T-cell (primary cell): ENCODE measurements at regions of chr9 and their contacts with region 1.

Region 1: DNA sequence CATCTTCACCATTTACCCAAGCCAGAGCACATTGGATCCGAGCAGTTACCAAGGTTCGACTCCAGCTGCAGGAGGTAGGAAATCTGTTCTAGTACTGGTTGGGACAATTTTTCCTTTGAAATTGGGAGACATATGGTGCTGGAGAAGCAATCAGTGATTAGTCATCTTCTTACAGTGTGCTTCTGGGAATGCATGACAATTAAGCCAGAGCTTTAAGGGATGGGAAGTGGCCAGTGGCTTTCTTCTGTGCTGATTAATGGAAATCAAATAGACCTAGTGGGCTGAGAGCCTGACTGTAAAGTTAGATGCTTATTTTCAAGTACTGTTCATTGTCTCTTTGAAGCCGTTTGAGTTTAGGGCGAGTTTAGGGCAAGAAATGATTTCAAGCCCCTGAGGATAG is 152.1 kb downstream of the UNC13B start:
- DNase-seq: no peak
- ATAC-seq: no peak
- H3K4me3 ChIP-seq: no peak overlapping the region
- H3K4me3 Mint-ChIP-seq: no peak overlapping the region
- H3K27ac ChIP-seq: no peak overlapping the region
- H3K27ac Mint-ChIP-seq: no peak overlapping the region
- H3K4me1 ChIP-seq: no peaks in the 10 kb centered on the region
- H3K4me1 Mint-ChIP-seq: no peaks in the 10 kb centered on the region
- H3K27me3 ChIP-seq: no peaks in the 10 kb centered on the region
- H3K27me3 Mint-ChIP-seq: peaks cover 0 to 4% of the 10 kb centered on the region in 2 donors

Region 2: GRCh38 chr9:35286381-35286780 is 27.5 kb before region 1 on chr9:
- CTCF ChIA-PET with region 1: no interaction called
- POLR2A ChIA-PET with region 1: interaction called in 1 of 2 experiments, 10 read pairs
- DNase-seq: no peak
- ATAC-seq: no peak
- H3K4me3 ChIP-seq: no peak overlapping the region
- H3K4me3 Mint-ChIP-seq: no peak overlapping the region
- H3K27ac ChIP-seq: no peak overlapping the region
- H3K27ac Mint-ChIP-seq: no peak overlapping the region
- H3K4me1 ChIP-seq: no peaks in the 10 kb centered on the region
- H3K4me1 Mint-ChIP-seq: no peaks in the 10 kb centered on the region
- H3K27me3 ChIP-seq: peaks cover 0 to 7% of the 10 kb centered on the region in 2 experiments
- H3K27me3 Mint-ChIP-seq: peaks cover 8 to 31% of the 10 kb centered on the region in 2 donors

Region 3: GRCh38 chr9:35341585-35341984 is 27.7 kb after region 1 on chr9:
- CTCF ChIA-PET with region 1: no interaction called
- POLR2A ChIA-PET with region 1: no interaction called
- DNase-seq: no peak
- ATAC-seq: no peak
- H3K4me3 ChIP-seq: no peak overlapping the region
- H3K4me3 Mint-ChIP-seq: no peak overlapping the region
- H3K27ac ChIP-seq: no peak overlapping the region
- H3K27ac Mint-ChIP-seq: no peak overlapping the region
- H3K4me1 ChIP-seq: no peaks in the 10 kb centered on the region
- H3K4me1 Mint-ChIP-seq: no peaks in the 10 kb centered on the region
- H3K27me3 ChIP-seq: peaks cover 0 to 13% of the 10 kb centered on the region in 2 experiments
- H3K27me3 Mint-ChIP-seq: peaks cover 13 to 16% of the 10 kb centered on the region in 2 donors

Region 4: DNA sequence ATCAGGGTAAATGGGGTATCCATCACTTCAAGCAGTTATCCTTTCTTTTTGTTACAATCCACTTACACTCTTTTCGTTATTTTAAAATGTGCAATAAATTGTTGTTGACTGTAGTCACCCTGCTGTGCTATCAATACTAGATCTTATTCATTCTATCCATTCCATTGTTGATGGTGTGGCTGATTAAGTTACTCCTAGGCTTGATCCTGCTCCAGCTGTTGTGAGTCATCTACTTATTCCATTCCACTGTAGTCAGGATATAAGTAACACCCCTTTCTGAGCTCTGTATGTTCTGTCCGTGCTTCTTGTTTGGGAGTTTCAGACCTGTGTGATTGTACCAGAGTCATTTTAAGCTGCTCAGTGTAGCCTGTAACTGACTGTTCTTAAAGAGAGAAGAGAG is 53.5 kb after region 1 on chr9:
- CTCF ChIA-PET with region 1: no interaction called
- POLR2A ChIA-PET with region 1: no interaction called
- DNase-seq: no peak
- ATAC-seq: no peak
- H3K4me3 ChIP-seq: no peak overlapping the region
- H3K4me3 Mint-ChIP-seq: no peak overlapping the region
- H3K27ac ChIP-seq: no peak overlapping the region
- H3K27ac Mint-ChIP-seq: no peak overlapping the region
- H3K4me1 ChIP-seq: no peaks in the 10 kb centered on the region
- H3K4me1 Mint-ChIP-seq: no peaks in the 10 kb centered on the region
- H3K27me3 ChIP-seq: peaks cover 0 to 5% of the 10 kb centered on the region in 2 experiments
- H3K27me3 Mint-ChIP-seq: peaks cover 0 to 2% of the 10 kb centered on the region in 2 donors